ENCODE measurements at regions of chr9 and their contacts with region 1.

Region 1: GRCh38 chr9:133945314-133945975 is 46.7 kb downstream of the VAV2 start:
- DNase-seq: no peak
- H3K4me3 ChIP-seq: no peak overlapping the region
- H3K27ac ChIP-seq: peak overlapping the region; percentile 0
- H3K4me1 ChIP-seq: peaks cover 25% of the 10 kb centered on the region
- H3K27me3 ChIP-seq: no peaks in the 10 kb centered on the region
- CTCF ChIP-seq: no peak

Region 2: DNA sequence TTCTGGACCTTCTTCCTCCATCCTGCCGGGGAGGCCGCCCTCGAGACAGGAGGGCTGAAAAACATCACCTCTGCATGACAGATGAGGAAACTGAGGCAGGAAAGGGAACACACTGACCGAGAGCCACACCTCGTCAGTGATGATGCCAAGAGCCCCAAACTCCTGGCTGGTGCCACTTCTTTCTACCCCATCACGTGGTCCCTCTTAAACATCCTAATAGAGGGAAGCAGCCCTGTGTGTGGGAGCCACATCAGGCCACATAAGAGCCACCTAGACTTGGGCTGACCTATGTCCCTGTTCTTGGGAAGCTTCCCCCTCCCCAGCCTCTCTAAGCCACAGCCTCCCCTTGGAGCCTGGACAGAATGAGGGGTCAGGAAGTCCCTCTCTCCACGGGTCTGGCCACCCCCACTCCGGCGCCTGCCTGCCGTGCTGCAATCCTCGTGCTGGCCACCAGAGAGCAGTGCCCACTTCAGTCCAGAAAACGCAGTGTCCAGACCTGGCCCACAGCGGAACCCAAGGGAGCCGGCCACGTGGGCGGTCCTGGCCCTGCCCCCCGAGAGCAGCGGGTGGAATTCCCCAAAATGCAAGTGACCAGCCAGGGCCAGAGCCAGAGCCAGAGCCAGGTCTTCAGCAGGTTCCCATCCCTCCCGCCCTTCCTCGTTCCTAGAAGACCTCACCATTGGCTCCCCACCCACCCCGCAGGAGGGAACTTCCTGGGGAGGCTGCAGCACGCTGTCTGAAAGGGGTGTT is 152.5 kb before region 1 on chr9:
- CTCF ChIA-PET with region 1: no interaction called
- dilution Hi-C with region 1: no loop called
- in situ Hi-C with region 1: no loop called
- intact Hi-C with region 1: loop called (anchors 2 kb)
- DNase-seq: peak; percentile 58
- H3K4me3 ChIP-seq: no peak overlapping the region
- H3K27ac ChIP-seq: no peak overlapping the region
- H3K4me1 ChIP-seq: peaks cover 9% of the 10 kb centered on the region
- H3K27me3 ChIP-seq: no peaks in the 10 kb centered on the region
- CTCF ChIP-seq: peak; percentile 77 to 90

Region 3: DNA sequence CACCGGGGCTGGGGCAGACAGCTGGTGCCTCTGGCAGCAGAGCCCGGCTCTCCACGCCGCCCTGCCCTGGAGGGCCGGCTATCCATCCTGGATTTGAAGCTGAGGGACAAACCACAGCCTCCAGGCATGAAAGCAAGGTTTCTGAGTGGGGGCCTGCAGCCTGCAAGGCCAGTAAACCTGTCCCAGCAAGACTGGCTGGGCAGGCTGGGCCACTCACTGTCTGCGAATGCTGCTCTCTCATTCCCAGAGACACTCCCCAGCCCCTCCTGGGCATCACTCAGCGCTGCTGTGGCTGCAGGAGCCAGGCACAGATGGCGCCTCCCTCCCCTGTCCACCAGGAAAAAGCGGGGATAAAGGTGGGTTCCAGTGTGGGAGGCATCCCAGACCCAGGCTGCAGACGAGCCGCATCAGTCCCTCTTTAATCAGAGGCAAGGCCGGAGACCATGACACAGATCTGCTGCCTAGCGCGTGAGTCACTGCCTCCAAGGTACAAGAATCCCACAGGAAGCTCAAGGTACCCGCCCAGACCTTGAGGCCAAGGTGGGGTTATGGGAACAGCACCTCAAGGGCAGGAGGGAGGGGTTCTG is 71.3 kb before region 1 on chr9:
- CTCF ChIA-PET with region 1: no interaction called
- dilution Hi-C with region 1: no loop called
- in situ Hi-C with region 1: no loop called
- intact Hi-C with region 1: loop called (anchors 1 kb)
- DNase-seq: peak; percentile 99
- H3K4me3 ChIP-seq: peak overlapping the region in 1 of 3 experiments; percentile 7
- H3K27ac ChIP-seq: peak overlapping the region; percentile 98
- H3K4me1 ChIP-seq: peaks cover 53% of the 10 kb centered on the region
- H3K27me3 ChIP-seq: no peaks in the 10 kb centered on the region
- CTCF ChIP-seq: no peak

Region 4: GRCh38 chr9:133881671-133882381 is 63.6 kb before region 1 on chr9:
- CTCF ChIA-PET with region 1: no interaction called
- dilution Hi-C with region 1: no loop called
- in situ Hi-C with region 1: no loop called
- intact Hi-C with region 1: loop called (anchors 2 kb)
- DNase-seq: peak; percentile 82
- H3K4me3 ChIP-seq: peak overlapping the region in 1 of 3 experiments; percentile 9
- H3K27ac ChIP-seq: peak overlapping the region; percentile 85
- H3K4me1 ChIP-seq: peaks cover 53% of the 10 kb centered on the region
- H3K27me3 ChIP-seq: no peaks in the 10 kb centered on the region
- CTCF ChIP-seq: no peak

Region 5: GRCh38 chr9:133967014-133967741 is 21.7 kb after region 1 on chr9:
- CTCF ChIA-PET with region 1: no interaction called
- dilution Hi-C with region 1: no loop called
- in situ Hi-C with region 1: no loop called
- intact Hi-C with region 1: loop called (anchors 2 kb)
- DNase-seq: peak; percentile 73
- H3K4me3 ChIP-seq: no peak overlapping the region
- H3K27ac ChIP-seq: no peak overlapping the region
- H3K4me1 ChIP-seq: peaks cover 31% of the 10 kb centered on the region
- H3K27me3 ChIP-seq: no peaks in the 10 kb centered on the region
- CTCF ChIP-seq: no peak

Region 6: GRCh38 chr9:133979273-133979920 is 34.0 kb after region 1 on chr9:
- CTCF ChIA-PET with region 1: interaction called, 7 read pairs
- dilution Hi-C with region 1: loop called (anchors 5 kb)
- in situ Hi-C with region 1: no loop called
- intact Hi-C with region 1: no loop called
- DNase-seq: no peak
- H3K4me3 ChIP-seq: no peak overlapping the region
- H3K27ac ChIP-seq: no peak overlapping the region
- H3K4me1 ChIP-seq: no peaks in the 10 kb centered on the region
- H3K27me3 ChIP-seq: no peaks in the 10 kb centered on the region
- CTCF ChIP-seq: no peak